Transverse colon (tissue), 4 donors: ENCODE measurements at regions of chr4 and their contacts with region 1.

Region 1: GRCh38 chr4:163535657-163536056 is 41.2 kb downstream of the TMA16 start:
- DNase-seq: no peak
- H3K4me3 ChIP-seq: no peak overlapping the region
- H3K27ac ChIP-seq: no peak overlapping the region
- H3K4me1 ChIP-seq: no peaks in the 10 kb centered on the region
- H3K27me3 ChIP-seq: no peaks in the 10 kb centered on the region
- CTCF ChIP-seq: no peak
- EP300 ChIP-seq: no peak
- POLR2A ChIP-seq: no peak

Region 2: DNA sequence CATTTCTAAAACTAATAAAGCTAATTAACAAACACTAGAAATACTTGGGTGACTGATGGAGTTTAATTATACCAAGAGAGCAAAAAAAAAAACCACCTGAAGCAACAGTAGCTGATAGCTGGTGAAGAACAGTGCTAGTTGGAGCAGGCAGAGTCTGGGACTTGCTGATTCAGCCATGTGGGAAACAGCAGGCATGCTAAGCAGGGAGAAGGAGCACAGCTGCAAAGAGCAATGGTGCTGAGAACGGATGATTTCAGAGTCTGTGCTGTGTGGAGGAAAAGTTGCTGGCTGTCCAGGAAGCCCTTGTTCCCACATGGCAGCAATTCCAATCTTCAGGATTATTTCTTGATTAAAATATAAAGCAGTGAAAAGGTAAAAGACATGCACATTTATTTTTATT is 272.1 kb before region 1 on chr4:
- in situ Hi-C with region 1: no loop called
- intact Hi-C with region 1: no loop called
- DNase-seq: no peak
- H3K4me3 ChIP-seq: no peak overlapping the region
- H3K27ac ChIP-seq: no peak overlapping the region
- H3K4me1 ChIP-seq: no peaks in the 10 kb centered on the region
- H3K27me3 ChIP-seq: no peaks in the 10 kb centered on the region
- CTCF ChIP-seq: no peak
- EP300 ChIP-seq: no peak
- POLR2A ChIP-seq: no peak

Region 3: DNA sequence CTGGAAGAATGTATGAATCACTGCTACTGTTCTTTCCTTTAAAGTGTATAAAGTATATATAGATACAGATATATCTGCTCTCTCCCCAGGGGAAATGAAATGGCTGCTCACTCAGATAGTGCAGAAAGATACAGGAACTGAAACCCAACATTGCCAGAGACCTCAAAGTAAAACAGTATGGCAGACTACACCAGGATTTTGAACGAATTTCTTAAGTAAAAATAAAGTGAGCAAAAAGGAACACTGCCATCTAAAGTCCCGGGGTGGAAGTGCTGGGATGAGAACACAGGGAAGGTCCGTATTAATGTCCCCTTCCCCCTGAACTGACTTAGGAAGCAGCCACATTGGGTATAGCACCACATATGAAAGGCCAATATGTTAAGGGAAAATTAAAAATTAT is 52.2 kb after region 1 on chr4:
- in situ Hi-C with region 1: no loop called
- intact Hi-C with region 1: loop called (anchors 2 kb)
- DNase-seq: no peak
- H3K4me3 ChIP-seq: no peak overlapping the region
- H3K27ac ChIP-seq: no peak overlapping the region
- H3K4me1 ChIP-seq: no peaks in the 10 kb centered on the region
- H3K27me3 ChIP-seq: no peaks in the 10 kb centered on the region
- CTCF ChIP-seq: no peak
- EP300 ChIP-seq: no peak
- POLR2A ChIP-seq: no peak